IMR-90 (cell line): ENCODE measurements at regions of chr14 and their contacts with region 1.

Region 1: GRCh38 chr14:34461334-34462131 is 507 bp downstream of the SPTSSA start:
- DNase-seq: peak; percentile 52
- ATAC-seq: peak; percentile 36
- H3K4me3 ChIP-seq: peak overlapping the region; percentile 82
- H3K27ac ChIP-seq: peak overlapping the region; percentile 80
- H3K4me1 ChIP-seq: peaks cover 6% of the 10 kb centered on the region
- H3K27me3 ChIP-seq: no peaks in the 10 kb centered on the region
- CTCF ChIP-seq: no peak
- POLR2A ChIP-seq: no peak
- RAD21 ChIP-seq: no peak

Region 2: DNA sequence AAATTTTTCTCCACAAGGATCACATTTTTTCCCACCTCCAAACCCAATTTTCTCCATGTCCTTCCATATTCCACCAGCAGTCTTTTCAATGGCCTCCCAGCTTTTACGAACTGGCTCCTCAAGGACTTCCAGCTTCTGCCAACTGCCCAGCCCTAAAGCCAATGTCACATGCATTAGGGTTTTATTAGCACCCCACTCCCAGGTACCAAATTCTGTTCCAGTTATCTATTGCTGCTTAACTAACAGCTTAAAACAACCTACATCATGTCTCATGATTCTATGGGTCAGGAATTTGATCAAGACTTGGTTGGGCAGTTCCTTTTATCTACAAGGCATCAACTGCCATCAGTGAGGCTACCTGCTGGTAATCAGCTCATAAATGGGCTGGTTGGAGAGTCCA is 150.8 kb before region 1 on chr14:
- CTCF ChIA-PET with region 1: no interaction called
- POLR2A ChIA-PET with region 1: interaction called, 14 read pairs
- dilution Hi-C with region 1: no loop called
- in situ Hi-C with region 1: no loop called
- intact Hi-C with region 1: no loop called
- DNase-seq: no peak
- ATAC-seq: no peak
- H3K4me3 ChIP-seq: no peak overlapping the region
- H3K27ac ChIP-seq: no peak overlapping the region
- H3K4me1 ChIP-seq: no peaks in the 10 kb centered on the region
- H3K27me3 ChIP-seq: peaks cover 5% of the 10 kb centered on the region
- CTCF ChIP-seq: no peak
- POLR2A ChIP-seq: no peak
- RAD21 ChIP-seq: no peak

Region 3: DNA sequence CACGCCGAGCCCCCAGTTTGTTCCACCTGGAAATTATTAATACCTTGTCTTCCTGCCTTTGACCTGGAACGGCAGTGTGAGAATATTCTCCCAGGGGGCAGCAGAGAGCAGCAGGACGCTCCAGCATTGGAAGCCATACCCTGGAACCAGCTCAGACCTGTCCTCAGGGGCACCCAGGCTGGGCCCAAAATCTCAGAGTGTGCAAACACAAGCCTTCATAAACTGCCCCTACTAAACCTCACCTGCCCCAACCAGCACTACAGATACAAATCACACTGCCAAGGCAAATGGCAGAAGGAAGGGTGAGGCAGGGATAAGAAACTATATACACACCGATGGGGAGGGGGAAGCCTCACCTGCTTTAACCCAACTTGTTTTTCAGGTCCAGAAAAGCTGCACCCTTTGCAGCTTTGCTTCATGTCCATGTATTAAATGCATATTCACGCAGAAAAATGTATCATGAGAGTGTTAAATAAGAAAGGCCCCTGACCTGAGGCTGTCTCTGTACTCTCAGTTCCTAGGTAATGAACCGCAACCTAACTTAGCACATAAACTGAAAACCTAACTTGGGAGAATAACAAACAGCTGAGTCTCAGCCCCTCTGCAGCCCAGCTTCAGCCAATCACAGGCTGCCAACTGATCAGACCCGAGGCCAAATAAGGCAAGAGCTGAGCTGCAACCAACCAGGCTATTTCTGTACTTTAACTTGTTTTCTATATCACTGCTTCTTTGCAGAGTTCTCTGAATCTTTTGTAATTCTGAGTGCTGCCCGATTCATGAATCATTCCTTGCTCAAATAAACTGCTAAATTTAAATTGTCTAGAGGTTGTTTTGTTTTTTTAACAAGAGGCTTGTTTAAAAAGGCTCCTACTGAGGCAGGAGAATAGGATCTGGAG is 129.6 kb before region 1 on chr14:
- CTCF ChIA-PET with region 1: no interaction called
- POLR2A ChIA-PET with region 1: no interaction called
- dilution Hi-C with region 1: no loop called
- in situ Hi-C with region 1: no loop called
- intact Hi-C with region 1: loop called (anchors 2 kb)
- DNase-seq: peak; percentile 62
- ATAC-seq: peak; percentile 77
- H3K4me3 ChIP-seq: no peak overlapping the region
- H3K27ac ChIP-seq: no peak overlapping the region
- H3K4me1 ChIP-seq: peaks cover 3% of the 10 kb centered on the region; the same call in 1 of the 2 replicates
- H3K27me3 ChIP-seq: no peaks in the 10 kb centered on the region
- CTCF ChIP-seq: peak; percentile 61
- POLR2A ChIP-seq: no peak
- RAD21 ChIP-seq: peak; percentile 65